Endothelial cell of umbilical vein (primary cell): ENCODE measurements at regions of chr17 and their contacts with region 1.

Region 1: GRCh38 chr17:45135192-45135977 is at the start of gene ACBD4:
- DNase-seq: peak; percentile 98
- H3K4me3 ChIP-seq: peak within 1 kb of the TSS; percentile 3 to 69 (median 53)
- H3K27ac ChIP-seq: peak within 1 kb of the TSS; percentile 14
- H3K4me1 ChIP-seq: peaks cover 17% of the 10 kb centered on the region
- H3K27me3 ChIP-seq: no peaks in the 10 kb centered on the region
- CTCF ChIP-seq: peak; percentile 100
- POLR2A ChIP-seq: peak; percentile 50
- total RNA-seq, gene ACBD4: 6.7 and 7.5 TPM in 2 replicates

Region 2: DNA sequence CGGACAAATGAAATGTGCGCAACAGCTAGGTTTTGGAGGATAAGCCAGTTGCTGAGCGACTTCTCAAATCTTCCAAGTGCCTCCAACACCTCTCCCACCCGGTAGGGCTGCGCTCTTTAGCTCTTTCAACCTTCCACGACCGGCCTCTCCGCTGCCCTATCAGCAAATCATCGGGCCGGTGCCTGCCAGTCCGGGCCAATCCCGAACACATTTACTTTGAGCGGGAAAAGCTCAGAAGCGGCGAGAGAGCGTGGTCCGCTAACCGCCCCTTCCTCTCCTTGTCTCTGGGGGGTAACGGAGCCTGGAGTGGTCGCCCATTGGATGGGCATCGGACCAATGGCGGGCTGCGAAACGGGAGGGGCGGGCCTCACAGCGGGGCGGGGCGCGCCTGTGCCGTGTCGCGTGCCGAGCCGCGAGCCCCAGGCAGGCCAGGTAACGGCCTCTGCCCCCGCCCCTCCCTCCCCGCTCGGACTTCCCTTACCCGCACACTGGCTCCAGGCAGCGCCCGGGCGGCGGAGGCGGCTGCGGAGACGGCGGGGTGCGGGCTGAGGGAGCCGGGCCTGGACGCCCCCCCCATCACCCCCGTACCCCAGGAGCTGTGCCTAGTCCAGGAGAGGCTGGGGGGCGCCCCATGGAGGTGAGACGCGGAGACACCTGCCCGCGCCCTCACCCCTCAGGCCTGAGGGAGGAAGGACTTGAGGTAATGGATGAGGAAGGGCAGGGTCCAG is 479.2 kb before region 1 on chr17 and contains the start of gene MEIOC:
- CTCF ChIA-PET with region 1: no interaction called
- POLR2A ChIA-PET with region 1: no interaction called
- dilution Hi-C with region 1: no loop called
- intact Hi-C with region 1: no loop called
- DNase-seq: peak; percentile 19
- H3K4me3 ChIP-seq: no peak within 1 kb of the TSS
- H3K27ac ChIP-seq: no peak within 1 kb of the TSS
- H3K4me1 ChIP-seq: no peaks in the 10 kb centered on the region
- H3K27me3 ChIP-seq: peaks cover 19 to 20% of the 10 kb centered on the region in 2 experiments
- CTCF ChIP-seq: peak in 1 of 2 donors; percentile 10
- POLR2A ChIP-seq: no peak
- total RNA-seq, gene MEIOC: 0.46 TPM in 1 of 2 replicates, not detected in the other

Region 3: DNA sequence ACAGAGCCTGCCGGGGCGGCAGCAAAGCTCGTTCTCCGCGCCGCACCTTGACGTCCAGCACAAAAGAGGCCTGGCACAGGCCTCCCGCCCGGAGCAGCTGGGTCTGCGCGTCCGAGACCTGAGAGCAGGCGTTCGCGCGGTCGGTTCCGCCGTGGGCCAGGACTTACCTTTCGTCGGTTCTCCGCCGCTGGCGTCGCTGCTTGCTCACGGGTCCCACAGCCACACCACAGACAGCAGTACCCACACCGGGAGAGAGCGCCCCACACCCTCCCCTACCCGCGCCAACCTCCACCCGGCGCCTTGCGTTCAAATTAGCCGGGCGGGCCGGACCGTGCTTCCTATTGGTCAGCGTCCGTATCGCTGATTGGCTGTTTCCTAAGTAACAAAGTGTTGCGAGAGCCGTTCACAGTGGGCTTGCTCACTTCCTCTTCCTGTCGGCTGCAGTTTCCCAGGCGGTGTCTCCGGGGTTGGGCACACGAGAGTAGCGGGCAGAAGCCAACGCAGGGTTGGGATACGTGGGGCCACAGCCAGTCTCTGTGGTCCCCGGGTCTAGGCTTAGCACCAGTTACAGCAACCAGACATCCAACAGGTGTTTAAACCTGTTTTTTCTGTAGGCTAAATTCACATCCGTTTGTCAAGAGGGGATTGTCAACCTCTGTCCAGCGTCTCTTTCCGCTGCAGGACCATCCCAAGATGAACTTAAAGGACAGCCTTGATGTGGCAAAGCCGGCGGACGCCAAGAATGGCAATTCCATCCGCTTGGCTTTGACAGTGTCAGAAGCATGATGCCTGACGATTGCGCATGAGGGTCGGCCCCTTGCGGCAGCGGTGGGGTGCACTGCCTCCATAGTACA is 187.7 kb before region 1 on chr17 and contains the start of gene KIF18B:
- CTCF ChIA-PET with region 1: interaction called, 10 read pairs
- POLR2A ChIA-PET with region 1: no interaction called
- dilution Hi-C with region 1: no loop called
- intact Hi-C with region 1: no loop called
- DNase-seq: peak; percentile 92
- H3K4me3 ChIP-seq: peak within 1 kb of the TSS; percentile 30 to 90 (median 63)
- H3K27ac ChIP-seq: peak within 1 kb of the TSS; percentile 59
- H3K4me1 ChIP-seq: peaks cover 11% of the 10 kb centered on the region
- H3K27me3 ChIP-seq: no peaks in the 10 kb centered on the region
- CTCF ChIP-seq: no peak
- POLR2A ChIP-seq: peak; percentile 97
- total RNA-seq, gene KIF18B: 48.4 and 50.3 TPM in 2 replicates

Region 4: DNA sequence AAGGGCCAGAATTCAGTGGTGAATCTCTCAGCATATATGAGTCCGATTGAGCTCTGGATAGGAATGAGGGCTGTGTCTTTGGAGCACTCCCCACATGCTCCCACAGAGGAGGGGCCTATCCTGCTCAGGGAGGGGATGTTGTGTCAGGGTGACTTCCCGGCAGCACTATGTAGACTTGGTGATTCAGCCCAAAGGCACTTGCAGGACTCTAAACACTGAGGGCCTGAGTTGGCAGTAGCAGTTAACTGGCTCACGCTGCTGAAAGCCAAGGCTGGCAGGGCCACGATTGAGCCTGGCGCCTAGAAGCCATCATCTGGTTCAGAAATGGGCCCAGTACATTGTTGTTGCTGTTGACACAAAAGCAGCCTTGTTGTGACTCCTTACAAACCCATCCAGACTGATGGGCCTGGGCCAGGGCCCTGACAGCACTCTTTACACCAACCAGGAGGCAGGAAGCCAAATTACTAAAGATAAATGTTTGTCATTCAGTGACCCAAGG is 42.4 kb before region 1 on chr17:
- CTCF ChIA-PET with region 1: interaction called, 13 read pairs
- POLR2A ChIA-PET with region 1: no interaction called
- dilution Hi-C with region 1: no loop called
- intact Hi-C with region 1: loop called (anchors 1 kb)
- DNase-seq: peak; percentile 95
- H3K4me3 ChIP-seq: no peak overlapping the region
- H3K27ac ChIP-seq: peak overlapping the region; percentile 92
- H3K4me1 ChIP-seq: peaks cover 23% of the 10 kb centered on the region
- H3K27me3 ChIP-seq: no peaks in the 10 kb centered on the region
- CTCF ChIP-seq: no peak
- POLR2A ChIP-seq: no peak

Region 5: GRCh38 chr17:45123930-45124796 is 11.2 kb before region 1 on chr17:
- CTCF ChIA-PET with region 1: interaction called, 34 read pairs
- POLR2A ChIA-PET with region 1: no interaction called
- dilution Hi-C with region 1: no loop called
- intact Hi-C with region 1: loop called (anchors 1 kb)
- DNase-seq: peak; percentile 90
- H3K4me3 ChIP-seq: no peak overlapping the region
- H3K27ac ChIP-seq: peak overlapping the region; percentile 59
- H3K4me1 ChIP-seq: peaks cover 30% of the 10 kb centered on the region
- H3K27me3 ChIP-seq: no peaks in the 10 kb centered on the region
- CTCF ChIP-seq: no peak
- POLR2A ChIP-seq: peak; percentile 34

Region 6: DNA sequence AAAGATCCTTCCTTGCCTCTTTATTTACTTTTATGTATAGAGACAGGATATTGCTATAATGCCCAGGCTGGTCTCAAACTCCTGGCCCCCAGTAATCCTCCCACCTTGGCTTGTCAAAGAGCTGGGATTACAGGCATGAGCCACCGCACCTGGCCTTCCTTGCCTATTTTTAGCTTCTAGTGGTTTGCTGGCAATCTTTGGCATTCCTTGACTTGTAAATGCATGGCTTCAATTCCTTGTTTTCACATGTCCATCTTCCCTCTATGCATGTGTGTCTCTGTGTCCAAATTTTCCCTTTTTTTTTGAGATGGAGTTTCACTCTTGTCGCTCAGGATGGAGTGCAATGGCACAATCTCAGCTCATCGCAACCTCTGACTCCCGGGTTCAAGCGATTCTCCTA is 48.8 kb after region 1 on chr17:
- CTCF ChIA-PET with region 1: interaction called, 20 read pairs
- POLR2A ChIA-PET with region 1: no interaction called
- dilution Hi-C with region 1: no loop called
- intact Hi-C with region 1: no loop called
- DNase-seq: no peak
- H3K4me3 ChIP-seq: no peak overlapping the region
- H3K27ac ChIP-seq: no peak overlapping the region
- H3K4me1 ChIP-seq: no peaks in the 10 kb centered on the region
- H3K27me3 ChIP-seq: no peaks in the 10 kb centered on the region
- CTCF ChIP-seq: no peak
- POLR2A ChIP-seq: no peak

Region 7: DNA sequence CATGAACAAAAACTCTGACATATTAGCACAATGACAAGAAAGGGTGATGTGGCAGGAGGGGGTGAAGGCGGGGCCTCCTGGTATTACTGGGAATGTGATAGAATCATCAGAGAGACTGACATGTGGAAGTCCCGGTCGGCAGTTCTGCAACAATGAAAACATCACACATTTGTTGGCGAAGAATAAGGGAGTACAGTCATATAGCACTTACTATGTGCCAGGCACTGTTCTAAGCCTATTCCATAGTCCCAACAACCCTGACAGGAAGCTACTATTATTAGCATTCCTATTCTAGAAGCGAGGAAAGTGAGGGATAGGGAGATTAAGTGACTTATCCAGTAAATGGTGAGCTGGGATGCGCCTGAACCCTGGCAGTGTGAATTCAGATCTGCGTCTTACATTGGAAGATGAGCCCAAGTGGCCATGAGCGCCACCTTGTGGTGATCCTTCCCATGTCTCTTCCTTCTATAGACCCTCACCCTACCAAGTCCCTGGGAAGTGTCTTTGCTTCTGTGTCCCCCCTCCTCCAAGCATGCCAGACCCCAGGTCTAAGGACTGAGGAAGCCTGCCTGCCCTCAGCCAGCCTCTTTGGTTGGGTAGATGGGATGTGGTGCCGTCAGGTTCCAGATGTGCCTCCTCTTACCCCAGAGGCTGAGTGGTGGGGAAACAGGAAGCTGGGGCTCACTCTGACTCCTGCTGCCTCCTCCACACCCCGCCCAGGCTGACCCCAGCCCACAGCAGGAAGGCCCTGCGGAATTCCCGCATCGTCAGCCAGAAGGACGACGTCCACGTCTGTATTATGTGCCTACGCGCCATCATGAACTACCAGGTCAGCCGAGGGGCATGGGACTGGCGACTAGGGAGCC is 100.3 kb after region 1 on chr17:
- CTCF ChIA-PET with region 1: interaction called, 51 read pairs
- POLR2A ChIA-PET with region 1: no interaction called
- dilution Hi-C with region 1: no loop called
- intact Hi-C with region 1: loop called (anchors 1 kb)
- DNase-seq: peak; percentile 77
- H3K4me3 ChIP-seq: no peak overlapping the region
- H3K27ac ChIP-seq: no peak overlapping the region
- H3K4me1 ChIP-seq: no peaks in the 10 kb centered on the region
- H3K27me3 ChIP-seq: peaks cover 4 to 5% of the 10 kb centered on the region in 2 experiments
- CTCF ChIP-seq: peak; percentile 82 to 87
- POLR2A ChIP-seq: no peak